GM12878 (cell line): ENCODE measurements at regions of chr17 and their contacts with region 1.

Region 1: GRCh38 chr17:39700148-39700987 is 504 bp downstream of the ERBB2 start:
- DNase-seq: no peak
- ATAC-seq: no peak
- H3K4me3 ChIP-seq: no peak overlapping the region
- H3K27ac ChIP-seq: no peak overlapping the region
- H3K4me1 ChIP-seq: peaks cover 11% of the 10 kb centered on the region
- H3K27me3 ChIP-seq: peaks cover 0 to 7% of the 10 kb centered on the region in 2 experiments; a peak in 2 of 4 replicates
- CTCF ChIP-seq: no peak
- EP300 ChIP-seq: no peak
- POLR2A ChIP-seq: no peak
- RAD21 ChIP-seq: no peak

Region 2: GRCh38 chr17:38925263-38925995 is 774.9 kb before region 1 on chr17 and contains the start of gene LASP1NB:
- CTCF ChIA-PET with region 1: no interaction called
- POLR2A ChIA-PET with region 1: no interaction called
- RAD21 ChIA-PET with region 1: no interaction called
- SMC1A ChIA-PET with region 1: no interaction called
- in situ Hi-C with region 1: no loop called
- intact Hi-C with region 1: no loop called
- DNase-seq: no peak
- ATAC-seq: no peak
- H3K4me3 ChIP-seq: no peak within 1 kb of the TSS
- H3K27ac ChIP-seq: no peak within 1 kb of the TSS
- H3K4me1 ChIP-seq: peaks cover 3% of the 10 kb centered on the region
- H3K27me3 ChIP-seq: no peaks in the 10 kb centered on the region
- CTCF ChIP-seq: no peak
- EP300 ChIP-seq: no peak
- POLR2A ChIP-seq: no peak
- RAD21 ChIP-seq: no peak

Region 3: GRCh38 chr17:39687811-39688518 is 12.4 kb before region 1 on chr17 and contains the start of gene PGAP3:
- CTCF ChIA-PET with region 1: interaction called, 4 read pairs
- POLR2A ChIA-PET with region 1: interaction called, 6 read pairs
- RAD21 ChIA-PET with region 1: interaction called, 3 read pairs
- SMC1A ChIA-PET with region 1: interaction called, 11 read pairs
- in situ Hi-C with region 1: no loop called
- intact Hi-C with region 1: no loop called
- DNase-seq: peak; percentile 78
- ATAC-seq: peak; percentile 98
- H3K4me3 ChIP-seq: peak within 1 kb of the TSS; percentile 88
- H3K27ac ChIP-seq: peak within 1 kb of the TSS; percentile 74
- H3K4me1 ChIP-seq: peaks cover 3% of the 10 kb centered on the region; the same call in 1 of the 2 replicates
- H3K27me3 ChIP-seq: no peaks in the 10 kb centered on the region
- CTCF ChIP-seq: peak in 1 of 3 experiments; percentile 10; a peak in 2 of 6 replicates
- EP300 ChIP-seq: no peak
- POLR2A ChIP-seq: peak; percentile 94
- RAD21 ChIP-seq: no peak
- polyA plus RNA-seq, gene PGAP3: 0.21 to 1.2 TPM